ENCODE measurements at regions of chr19 and their contacts with region 1.

Region 1: DNA sequence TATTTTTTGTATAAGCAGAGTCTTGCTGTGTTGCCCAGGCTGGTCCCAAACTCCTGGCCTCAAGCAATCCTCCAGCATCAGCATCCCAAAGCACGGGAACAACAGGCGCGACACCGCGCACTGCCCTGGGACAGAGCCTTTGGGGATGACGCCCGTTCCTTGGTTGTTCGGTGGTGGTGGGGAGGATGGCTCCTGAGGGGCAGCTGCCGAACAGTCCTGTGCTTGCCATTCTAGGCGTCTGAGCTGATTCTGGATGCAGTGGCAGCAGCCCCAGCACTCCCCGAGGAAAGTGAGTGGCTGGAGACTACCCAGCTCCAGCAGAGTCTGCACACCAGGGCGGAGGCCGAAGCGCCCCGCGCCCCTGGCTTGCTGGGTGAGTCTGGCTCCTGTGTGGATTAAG is 6.8 kb upstream of the ZNF135 start:
- DNase-seq: no peak
- ATAC-seq: no peak
- H3K4me3 ChIP-seq: no peak overlapping the region
- H3K27ac ChIP-seq: no peak overlapping the region
- H3K4me1 ChIP-seq: no peaks in the 10 kb centered on the region
- H3K27me3 ChIP-seq: no peaks in the 10 kb centered on the region

Region 2: GRCh38 chr19:57841122-57841763 is 211.0 kb before region 1 on chr19:
- intact Hi-C with region 1: no loop called
- DNase-seq: no peak
- ATAC-seq: no peak
- H3K4me3 ChIP-seq: no peak overlapping the region
- H3K27ac ChIP-seq: no peak overlapping the region
- H3K4me1 ChIP-seq: no peaks in the 10 kb centered on the region
- H3K27me3 ChIP-seq: no peaks in the 10 kb centered on the region

Region 3: DNA sequence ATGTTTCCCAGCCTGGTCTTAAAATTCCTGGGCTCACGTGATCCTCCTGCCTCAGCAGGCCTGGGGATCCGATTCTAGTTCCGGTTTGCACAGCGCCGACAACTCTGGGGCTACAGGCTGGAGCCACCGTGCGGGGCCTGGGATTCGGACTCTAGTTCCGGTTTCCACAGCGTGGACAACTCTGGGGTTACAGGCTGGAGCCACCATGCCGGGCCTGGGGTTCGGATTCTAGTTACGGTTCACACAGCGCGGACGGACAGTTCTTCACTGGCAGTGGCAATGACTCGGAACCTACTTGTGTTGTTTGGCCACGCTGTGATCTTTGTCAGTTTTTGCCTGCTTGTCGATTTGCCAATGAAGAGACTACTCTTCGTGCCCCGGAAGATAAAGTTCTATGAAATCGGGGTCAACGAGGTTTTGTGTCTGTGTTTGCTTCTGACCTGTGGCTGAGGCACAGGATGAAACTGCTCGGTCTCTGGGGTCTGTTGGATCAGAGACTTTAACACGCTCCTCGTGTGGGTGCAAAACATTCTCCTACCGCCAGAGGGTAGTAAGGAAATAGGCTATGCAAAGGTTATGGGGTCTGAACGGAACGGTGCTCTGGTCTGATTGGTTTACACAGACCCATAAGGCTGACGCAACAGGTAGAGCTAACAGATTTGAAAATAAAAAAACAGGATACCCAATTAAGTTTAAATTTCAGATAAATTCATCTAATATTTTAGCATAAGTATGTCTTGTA is 30.5 kb before region 1 on chr19:
- intact Hi-C with region 1: loop called in 1 of 4 experiments (anchors 1 kb)
- DNase-seq: peak in 1 of 3 donors; percentile 49
- ATAC-seq: peak; percentile 94 to 96
- H3K4me3 ChIP-seq: no peak overlapping the region
- H3K27ac ChIP-seq: no peak overlapping the region
- H3K4me1 ChIP-seq: no peaks in the 10 kb centered on the region
- H3K27me3 ChIP-seq: no peaks in the 10 kb centered on the region

Region 4: GRCh38 chr19:58170860-58171259 is 118.6 kb after region 1 on chr19:
- intact Hi-C with region 1: no loop called
- DNase-seq: no peak
- ATAC-seq: no peak
- H3K4me3 ChIP-seq: no peak overlapping the region
- H3K27ac ChIP-seq: no peak overlapping the region
- H3K4me1 ChIP-seq: no peaks in the 10 kb centered on the region
- H3K27me3 ChIP-seq: no peaks in the 10 kb centered on the region

Measured in right cardiac atrium (tissue), 5 donors.